Transverse colon (tissue), 4 donors: ENCODE measurements at regions of chr18 and their contacts with region 1.

Region 1: DNA sequence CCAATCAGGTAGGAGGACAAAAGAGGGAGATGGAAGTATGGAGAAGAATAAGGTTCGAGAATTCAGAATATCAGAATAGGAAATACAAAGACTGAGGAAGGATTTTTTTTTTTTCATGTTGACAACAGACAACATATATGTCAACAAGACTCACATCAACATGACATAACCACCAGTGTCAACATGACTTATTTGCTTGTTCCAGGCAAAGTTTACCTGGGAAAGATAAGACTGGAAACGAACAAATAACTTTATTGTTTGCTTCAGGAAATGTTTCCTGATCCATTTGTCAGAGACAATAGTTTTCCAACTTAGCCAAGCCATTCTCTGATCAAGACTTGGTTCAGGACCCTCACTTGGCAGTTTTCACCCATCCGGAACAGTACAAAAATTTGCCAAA is 321.9 kb upstream of the NETO1 start:
- DNase-seq: no peak
- H3K4me3 ChIP-seq: no peak overlapping the region
- H3K27ac ChIP-seq: no peak overlapping the region
- H3K4me1 ChIP-seq: no peaks in the 10 kb centered on the region
- H3K27me3 ChIP-seq: no peaks in the 10 kb centered on the region
- CTCF ChIP-seq: no peak
- EP300 ChIP-seq: no peak
- POLR2A ChIP-seq: no peak

Region 2: DNA sequence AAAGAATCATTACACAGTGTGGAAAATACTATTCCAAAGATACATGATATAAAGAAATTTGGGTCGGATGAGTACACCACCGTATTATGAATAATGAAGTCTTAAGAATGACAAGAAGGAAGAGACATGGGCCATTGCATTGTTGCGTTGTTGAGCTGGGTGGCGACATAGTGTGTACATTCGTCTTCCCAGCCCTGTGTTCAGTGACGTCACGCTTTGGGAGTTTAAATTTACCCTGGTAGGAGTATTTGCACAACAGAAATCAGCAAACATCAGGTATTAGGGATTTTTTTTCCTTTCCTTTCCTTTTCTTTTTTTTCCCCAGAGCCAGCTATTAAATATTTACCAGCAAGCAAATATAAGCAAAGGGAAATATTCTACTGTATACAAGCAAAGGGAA is 25.2 kb after region 1 on chr18:
- in situ Hi-C with region 1: no loop called
- intact Hi-C with region 1: loop called (anchors 1 kb)
- DNase-seq: no peak
- H3K4me3 ChIP-seq: no peak overlapping the region
- H3K27ac ChIP-seq: no peak overlapping the region
- H3K4me1 ChIP-seq: no peaks in the 10 kb centered on the region
- H3K27me3 ChIP-seq: no peaks in the 10 kb centered on the region
- CTCF ChIP-seq: no peak
- EP300 ChIP-seq: no peak
- POLR2A ChIP-seq: no peak